ENCODE measurements at regions of chr7 and their contacts with region 1.

Region 1: GRCh38 chr7:95642173-95642572 is 45.9 kb upstream of the PDK4 start:
- DNase-seq: no peak
- H3K4me3 ChIP-seq: no peak overlapping the region
- H3K27ac ChIP-seq: no peak overlapping the region
- H3K4me1 ChIP-seq: no peaks in the 10 kb centered on the region
- H3K27me3 ChIP-seq: no peaks in the 10 kb centered on the region
- CTCF ChIP-seq: no peak

Region 2: GRCh38 chr7:95658676-95659075 is 16.5 kb after region 1 on chr7:
- CTCF ChIA-PET with region 1: no interaction called
- POLR2A ChIA-PET with region 1: no interaction called
- intact Hi-C with region 1: loop called (anchors 1 kb)
- DNase-seq: no peak
- H3K4me3 ChIP-seq: no peak overlapping the region
- H3K27ac ChIP-seq: no peak overlapping the region
- H3K4me1 ChIP-seq: no peaks in the 10 kb centered on the region
- H3K27me3 ChIP-seq: no peaks in the 10 kb centered on the region
- CTCF ChIP-seq: no peak

Region 3: DNA sequence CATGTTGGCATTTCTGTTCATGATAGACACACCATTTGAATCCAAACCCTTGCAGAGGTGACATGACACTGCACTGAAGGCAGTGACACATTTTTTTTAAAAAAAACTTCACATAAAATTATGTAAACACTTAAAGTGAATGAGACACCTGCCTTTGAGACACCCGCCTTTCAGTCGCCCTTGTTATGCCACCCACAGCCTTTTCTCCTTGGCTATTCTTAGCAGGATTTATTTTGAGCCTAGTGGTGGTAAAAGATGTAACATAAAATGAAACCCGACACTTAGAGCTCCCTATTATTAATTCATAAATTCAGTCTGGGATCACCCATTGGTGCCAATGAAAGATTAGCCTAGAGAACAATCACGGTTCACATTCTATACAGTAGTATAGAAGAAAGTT is 291.4 kb after region 1 on chr7:
- CTCF ChIA-PET with region 1: no interaction called
- POLR2A ChIA-PET with region 1: no interaction called
- intact Hi-C with region 1: no loop called
- DNase-seq: no peak
- H3K4me3 ChIP-seq: no peak overlapping the region
- H3K27ac ChIP-seq: no peak overlapping the region
- H3K4me1 ChIP-seq: no peaks in the 10 kb centered on the region
- H3K27me3 ChIP-seq: no peaks in the 10 kb centered on the region
- CTCF ChIP-seq: no peak

Measured in PC-9 (cell line).